OCI-LY7 (cell line): ENCODE measurements at regions of chr20 and their contacts with region 1.

Region 1: GRCh38 chr20:57622579-57623377 is 2.6 kb upstream of the ZBP1 start:
- DNase-seq: peak; percentile 83
- H3K4me3 ChIP-seq: no peak overlapping the region
- H3K27ac ChIP-seq: no peak overlapping the region
- H3K4me1 ChIP-seq: peaks cover 62% of the 10 kb centered on the region
- CTCF ChIP-seq: peak; percentile 95

Region 2: GRCh38 chr20:57633945-57634491 is 11.2 kb after region 1 on chr20:
- CTCF ChIA-PET with region 1: interaction called, 4 read pairs
- POLR2A ChIA-PET with region 1: interaction called, 22 read pairs
- intact Hi-C with region 1: loop called (anchors 1 kb)
- DNase-seq: peak; percentile 85
- H3K4me3 ChIP-seq: no peak overlapping the region
- H3K27ac ChIP-seq: peak overlapping the region; percentile 25
- H3K4me1 ChIP-seq: peaks cover 43% of the 10 kb centered on the region
- CTCF ChIP-seq: no peak

Region 3: DNA sequence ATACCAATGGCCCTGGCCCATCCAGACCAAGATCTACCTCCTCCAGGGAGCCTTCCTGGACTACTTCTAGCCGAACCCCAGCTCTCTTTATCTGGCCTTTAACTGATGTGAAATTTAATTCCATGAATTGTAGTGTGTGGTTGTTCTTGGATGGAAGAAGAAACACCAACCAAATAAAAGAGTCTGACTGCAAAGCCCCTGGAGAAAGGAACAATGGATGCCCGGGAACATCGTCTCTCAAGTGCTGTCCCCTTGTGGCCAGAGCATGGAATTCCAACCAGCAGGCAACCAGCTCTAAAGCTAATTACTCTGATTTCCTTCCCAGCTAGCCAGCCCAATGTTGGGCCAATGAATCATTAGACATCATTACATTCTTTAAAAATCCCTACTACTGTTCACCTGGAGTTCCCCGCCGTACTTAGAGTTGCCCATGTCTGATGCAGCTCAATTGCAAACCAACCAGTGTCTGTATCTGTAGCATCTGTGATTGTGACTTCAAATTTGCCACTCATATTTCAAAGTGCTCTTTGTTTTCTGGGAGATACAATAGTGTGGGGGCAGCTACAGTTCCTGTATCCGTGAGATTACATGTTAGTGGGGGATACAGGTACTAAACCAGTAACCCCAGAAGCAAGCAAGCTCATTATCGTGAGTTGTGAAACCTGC is 464.5 kb after region 1 on chr20:
- CTCF ChIA-PET with region 1: interaction called, 3 read pairs
- POLR2A ChIA-PET with region 1: no interaction called
- intact Hi-C with region 1: loop called (anchors 10 kb)
- DNase-seq: peak; percentile 42
- H3K4me3 ChIP-seq: no peak overlapping the region
- H3K27ac ChIP-seq: no peak overlapping the region
- H3K4me1 ChIP-seq: no peaks in the 10 kb centered on the region
- CTCF ChIP-seq: peak; percentile 91

Region 4: DNA sequence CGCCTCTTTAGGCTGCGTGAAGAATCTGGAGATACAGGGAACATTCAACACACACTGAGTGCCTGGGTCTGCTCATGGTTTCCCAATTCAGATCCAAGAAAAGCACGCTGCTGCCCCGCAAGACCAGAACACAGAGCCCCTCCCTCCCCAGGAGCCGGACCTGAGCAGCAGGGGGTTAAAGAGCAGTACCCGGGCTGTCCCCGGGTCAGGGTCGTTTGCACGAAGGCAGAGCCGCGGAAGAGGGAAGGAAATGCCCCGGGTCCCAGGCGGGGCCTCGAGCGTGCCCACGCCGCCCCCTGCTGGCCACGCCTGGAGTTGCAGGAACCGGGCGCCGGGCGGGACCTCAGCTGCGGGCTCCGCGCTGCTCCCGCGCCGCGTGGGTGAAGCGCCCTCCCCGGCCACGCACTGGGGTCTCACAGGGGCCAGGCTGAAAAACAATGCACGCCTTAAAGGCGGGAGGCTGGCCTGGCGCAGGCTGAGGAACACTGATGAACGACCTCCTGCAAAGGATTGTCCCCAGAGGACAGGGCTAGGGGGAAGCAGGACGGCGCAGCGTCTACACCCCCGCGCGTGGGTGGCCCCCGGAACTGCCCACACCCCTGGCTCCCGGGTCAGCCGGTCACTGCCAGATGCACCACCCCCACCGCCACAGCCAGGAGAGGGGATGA is 556.8 kb after region 1 on chr20:
- CTCF ChIA-PET with region 1: no interaction called
- POLR2A ChIA-PET with region 1: interaction called, 3 read pairs
- intact Hi-C with region 1: loop called (anchors 1 kb)
- DNase-seq: peak; percentile 67
- H3K4me3 ChIP-seq: peak overlapping the region; percentile 32
- H3K27ac ChIP-seq: no peak overlapping the region
- H3K4me1 ChIP-seq: peaks cover 4% of the 10 kb centered on the region
- CTCF ChIP-seq: peak; percentile 91